CD14-positive monocyte (primary cell): ENCODE measurements at regions of chr21 and their contacts with region 1.

Region 1: DNA sequence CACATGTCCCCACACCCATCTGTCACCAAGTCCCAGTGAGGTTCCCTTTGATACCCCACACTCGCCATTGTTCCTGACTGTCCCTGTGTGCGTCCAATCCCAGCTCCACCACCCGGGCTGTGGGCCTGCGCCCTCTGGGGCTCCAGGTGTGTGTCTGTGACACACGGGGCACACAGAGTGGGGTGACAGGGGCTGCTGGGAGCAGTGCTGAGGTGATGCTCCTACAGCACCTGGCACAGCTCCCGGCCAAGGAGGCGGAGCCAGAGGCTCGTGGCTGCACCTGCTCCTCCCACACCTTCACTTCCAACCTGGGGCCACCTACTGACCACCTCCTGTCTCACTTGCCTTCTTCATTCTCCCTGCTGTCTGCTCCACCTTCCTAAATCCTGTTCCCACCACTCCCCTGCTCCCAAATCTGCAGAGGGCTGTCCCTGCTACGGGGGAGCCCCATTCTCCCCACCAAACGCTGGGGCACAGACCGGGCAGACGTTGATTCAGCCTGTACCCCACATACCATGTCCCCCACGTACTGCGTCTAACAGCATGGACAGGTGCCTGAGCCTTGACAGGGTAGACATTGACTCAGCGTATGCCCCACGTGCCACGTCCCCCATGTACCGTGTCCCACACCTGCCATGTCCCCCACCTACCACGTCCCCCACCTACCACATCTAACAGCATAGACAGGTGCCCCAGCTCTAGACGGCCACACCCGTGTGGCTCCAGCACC is 16.4 kb downstream of the WDR4 start:
- DNase-seq: no peak
- H3K4me3 ChIP-seq: no peak overlapping the region
- H3K4me3 Mint-ChIP-seq: no peak overlapping the region
- H3K27ac ChIP-seq: no peak overlapping the region
- H3K27ac Mint-ChIP-seq: peak overlapping the region in 2 of 7 donors; percentile 38 to 64
- H3K4me1 ChIP-seq: no peaks in the 10 kb centered on the region
- H3K4me1 Mint-ChIP-seq: no peaks in the 10 kb centered on the region
- H3K27me3 ChIP-seq: no peaks in the 10 kb centered on the region
- H3K27me3 Mint-ChIP-seq: peaks cover 0 to 2% (median 0%) of the 10 kb centered on the region in 3 donors
- CTCF ChIP-seq: no peak

Region 2: DNA sequence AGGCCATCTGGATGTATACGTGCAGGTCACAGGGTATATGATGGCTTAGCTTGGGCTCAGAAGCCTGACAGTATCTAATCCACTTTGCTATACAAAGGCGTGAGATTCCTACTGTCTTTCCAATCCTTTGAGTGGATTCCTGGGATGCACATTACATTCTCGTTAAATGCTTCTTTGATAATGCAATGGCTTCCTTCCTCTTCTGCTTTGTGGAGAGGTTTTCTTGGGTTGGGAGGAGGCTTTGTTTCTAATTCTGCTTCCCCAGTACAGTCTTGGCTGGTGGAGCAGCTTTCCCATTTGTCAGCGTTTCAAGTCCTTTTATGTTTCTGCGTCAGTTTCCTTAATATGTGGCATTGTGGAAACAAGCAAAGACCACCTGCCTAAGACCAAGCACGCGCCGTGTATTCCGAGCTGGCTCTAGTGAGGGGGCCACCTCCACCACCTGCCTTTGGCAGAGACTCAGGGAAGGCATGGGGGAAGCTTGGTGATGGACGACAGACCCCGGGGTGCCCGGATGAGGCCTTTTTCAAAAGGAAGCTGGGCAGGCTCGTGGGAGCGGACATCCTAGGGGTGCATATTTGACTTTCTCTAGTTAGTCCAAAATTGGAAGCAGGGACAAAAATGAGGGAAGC is 56.3 kb before region 1 on chr21:
- intact Hi-C with region 1: loop called in 1 of 2 experiments (anchors 10 kb)
- DNase-seq: peak in 1 of 3 donors; percentile 13
- H3K4me3 ChIP-seq: peak overlapping the region in 1 of 3 experiments; percentile 34
- H3K4me3 Mint-ChIP-seq: peak overlapping the region in 1 of 2 donors; percentile 22
- H3K27ac ChIP-seq: peak overlapping the region in 1 of 2 donors; percentile 14
- H3K27ac Mint-ChIP-seq: no peak overlapping the region
- H3K4me1 ChIP-seq: peaks cover 13% of the 10 kb centered on the region in 2 donors
- H3K4me1 Mint-ChIP-seq: peaks cover 23% of the 10 kb centered on the region
- H3K27me3 ChIP-seq: no peaks in the 10 kb centered on the region
- H3K27me3 Mint-ChIP-seq: peaks cover 2 to 7% (median 7%) of the 10 kb centered on the region in 3 donors
- CTCF ChIP-seq: no peak